ENCODE measurements at regions of chr3 and their contacts with region 1.

Region 1: GRCh38 chr3:161239703-161240102 is 18.6 kb downstream of the NMD3 start:
- DNase-seq: no peak
- H3K4me3 Mint-ChIP-seq: no peak overlapping the region
- H3K27ac Mint-ChIP-seq: no peak overlapping the region
- H3K4me1 Mint-ChIP-seq: peaks cover 10% of the 10 kb centered on the region
- H3K27me3 Mint-ChIP-seq: no peaks in the 10 kb centered on the region

Region 2: GRCh38 chr3:161253711-161254110 is 14.0 kb after region 1 on chr3:
- CTCF ChIA-PET with region 1: no interaction called
- POLR2A ChIA-PET with region 1: no interaction called
- intact Hi-C with region 1: loop called (anchors 2 kb)
- DNase-seq: no peak
- H3K4me3 Mint-ChIP-seq: no peak overlapping the region
- H3K27ac Mint-ChIP-seq: no peak overlapping the region
- H3K4me1 Mint-ChIP-seq: peaks cover 4% of the 10 kb centered on the region
- H3K27me3 Mint-ChIP-seq: no peaks in the 10 kb centered on the region

Region 3: DNA sequence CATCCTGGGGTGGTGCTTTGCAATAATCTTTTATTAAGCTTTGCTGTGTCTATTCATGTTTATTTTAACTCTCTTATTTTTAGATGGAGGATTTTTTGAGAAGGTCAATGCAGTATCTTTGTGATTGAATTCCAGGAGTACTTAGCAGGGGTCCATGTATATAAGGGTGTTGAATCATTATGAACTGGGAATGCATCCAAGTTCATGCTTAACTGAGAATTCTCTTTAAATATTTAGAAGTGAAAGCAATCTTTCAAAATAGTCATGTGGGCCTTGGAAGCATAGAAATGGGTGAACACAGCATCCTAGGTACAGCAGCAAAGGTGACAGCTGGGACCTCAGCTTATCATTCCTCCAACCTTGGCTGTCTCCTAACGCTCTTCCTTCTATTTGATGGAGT is 104.3 kb after region 1 on chr3:
- CTCF ChIA-PET with region 1: no interaction called
- POLR2A ChIA-PET with region 1: no interaction called
- intact Hi-C with region 1: no loop called
- DNase-seq: no peak
- H3K4me3 Mint-ChIP-seq: no peak overlapping the region
- H3K27ac Mint-ChIP-seq: no peak overlapping the region
- H3K4me1 Mint-ChIP-seq: peaks cover 11% of the 10 kb centered on the region
- H3K27me3 Mint-ChIP-seq: peaks cover 8% of the 10 kb centered on the region